ENCODE measurements at regions of chr2 and their contacts with region 1.

Region 1: GRCh38 chr2:126776692-126777619 is 121.0 kb downstream of the GYPC start:
- DNase-seq: peak; percentile 89
- H3K4me3 ChIP-seq: peak overlapping the region; percentile 44 to 61 (median 55)
- H3K27ac ChIP-seq: peak overlapping the region; percentile 30 to 58 (median 40)
- H3K4me1 ChIP-seq: peaks cover 0 to 11% (median 2%) of the 10 kb centered on the region in 4 donors
- H3K27me3 ChIP-seq: no peaks in the 10 kb centered on the region
- CTCF ChIP-seq: peak; percentile 78 to 91 (median 88)
- EP300 ChIP-seq: no peak
- POLR2A ChIP-seq: no peak

Region 2: DNA sequence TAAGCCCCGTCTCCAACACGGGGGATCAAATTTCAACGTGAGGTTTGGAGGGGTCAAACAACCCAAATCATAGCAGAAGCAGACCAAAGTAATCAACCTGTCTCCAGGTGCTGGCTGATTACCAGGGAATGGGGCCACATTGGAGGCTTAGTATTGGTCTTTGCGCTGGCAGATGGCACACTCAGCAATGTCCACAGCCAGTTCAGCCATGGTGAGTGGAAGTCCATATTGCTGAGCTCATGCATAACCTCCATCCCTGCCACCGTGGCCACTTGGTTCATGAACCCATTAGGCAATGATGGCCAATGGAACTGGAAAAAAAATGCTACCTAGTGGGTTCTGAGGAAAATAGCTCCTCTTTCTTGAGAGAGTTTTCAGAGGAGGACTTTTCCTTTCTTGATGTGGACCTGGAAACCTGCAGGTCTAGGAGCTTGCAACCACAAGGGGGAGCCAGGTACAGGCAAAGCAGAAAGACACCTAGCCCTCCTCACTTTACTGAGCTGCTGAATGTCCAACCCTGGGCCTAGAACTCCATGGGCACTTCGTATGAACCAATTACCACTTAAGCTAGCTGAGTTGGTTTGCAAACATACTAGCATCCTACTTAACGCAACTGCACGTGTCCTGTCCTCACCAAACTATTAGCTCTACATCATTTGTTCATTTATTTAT is 249.0 kb before region 1 on chr2:
- intact Hi-C with region 1: loop called (anchors 1 kb)
- DNase-seq: peak; percentile 74
- H3K4me3 ChIP-seq: no peak overlapping the region
- H3K27ac ChIP-seq: no peak overlapping the region
- H3K4me1 ChIP-seq: no peaks in the 10 kb centered on the region
- H3K27me3 ChIP-seq: no peaks in the 10 kb centered on the region
- CTCF ChIP-seq: peak in 3 of 4 experiments; percentile 19 to 45 (median 30)
- EP300 ChIP-seq: no peak
- POLR2A ChIP-seq: no peak

Region 3: DNA sequence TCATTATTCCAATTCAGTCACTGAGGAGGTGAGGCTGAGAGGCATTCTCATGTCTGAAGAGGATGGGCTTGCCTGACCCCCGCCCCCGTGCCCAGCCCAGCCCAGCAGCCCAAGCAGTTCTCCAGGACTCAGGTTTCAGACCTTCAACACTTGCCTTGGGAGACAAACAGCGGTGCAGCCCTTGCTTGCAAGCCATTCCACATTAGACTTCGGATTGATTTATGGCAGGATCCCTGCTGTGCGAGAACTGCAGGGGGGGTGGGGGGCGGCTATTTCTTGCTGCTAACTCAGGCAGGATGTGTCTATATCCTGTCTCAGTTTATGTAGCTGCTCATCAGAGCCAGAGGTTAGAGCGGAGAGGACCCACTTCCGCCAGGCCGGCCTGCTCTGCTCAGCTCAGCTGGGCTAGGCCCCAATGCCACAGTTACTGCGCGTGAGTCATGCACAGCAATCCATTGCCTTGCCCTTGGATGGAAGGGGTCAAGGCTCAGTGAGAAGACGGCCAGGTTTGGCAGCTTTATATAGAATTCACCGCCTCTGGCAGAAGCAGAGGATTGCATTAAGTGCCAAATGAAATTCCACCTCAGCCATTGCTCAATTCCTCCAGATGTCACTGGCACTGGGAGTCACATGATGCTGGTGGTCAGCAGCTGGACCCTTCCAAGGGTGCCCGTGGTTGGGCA is 119.2 kb before region 1 on chr2:
- intact Hi-C with region 1: loop called (anchors 2 kb)
- DNase-seq: peak; percentile 94
- H3K4me3 ChIP-seq: peak overlapping the region; percentile 69 to 88 (median 86)
- H3K27ac ChIP-seq: peak overlapping the region; percentile 94 to 99 (median 99)
- H3K4me1 ChIP-seq: peaks cover 0 to 73% (median 67%) of the 10 kb centered on the region in 4 donors
- H3K27me3 ChIP-seq: no peaks in the 10 kb centered on the region
- CTCF ChIP-seq: no peak
- EP300 ChIP-seq: peak in 3 of 4 donors; percentile 44 to 69 (median 56)
- POLR2A ChIP-seq: peak in 1 of 2 donors; percentile 17

Region 4: DNA sequence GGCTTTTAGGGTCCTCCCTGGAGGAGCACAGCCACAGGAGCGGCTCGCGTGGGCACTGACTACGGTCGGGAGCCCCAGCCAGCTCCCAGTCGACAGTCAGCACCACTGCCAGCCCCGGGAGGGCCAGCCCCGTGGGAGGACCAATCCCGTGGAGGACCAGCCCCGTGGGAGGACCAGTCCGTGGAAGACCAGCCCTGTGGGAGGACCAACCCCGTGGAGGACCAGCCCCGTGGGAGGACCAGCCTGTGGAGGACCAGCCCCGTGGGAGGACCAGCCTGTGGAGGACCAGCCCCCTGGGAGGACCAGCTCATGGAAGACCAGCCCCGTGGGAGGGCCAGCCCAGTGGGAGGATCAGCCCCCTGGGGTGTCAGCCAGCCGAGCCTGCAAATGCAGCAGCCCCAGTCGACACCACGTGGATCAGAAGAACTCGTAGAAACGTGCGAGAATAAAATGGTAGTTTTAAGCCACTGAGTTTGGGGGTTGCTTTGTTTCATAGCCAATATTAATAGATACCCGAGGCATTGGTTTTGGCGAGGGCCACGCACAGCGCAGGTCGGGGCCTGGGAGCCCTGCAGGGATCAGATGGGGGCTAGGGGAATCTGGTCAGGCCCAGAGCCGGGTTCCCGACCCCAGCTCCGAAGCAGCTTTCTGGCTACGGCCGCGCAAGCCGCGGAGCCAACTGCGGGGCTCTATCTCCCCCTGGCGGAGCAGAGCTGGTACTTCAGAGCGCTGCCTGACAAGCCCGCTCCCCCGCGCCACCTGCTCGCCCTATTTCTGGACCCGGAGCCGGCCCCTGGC is 194.7 kb after region 1 on chr2:
- intact Hi-C with region 1: loop called (anchors 2 kb)
- DNase-seq: peak; percentile 87
- H3K4me3 ChIP-seq: peak overlapping the region; percentile 19 to 45 (median 38)
- H3K27ac ChIP-seq: peak overlapping the region; percentile 53 to 75 (median 69)
- H3K4me1 ChIP-seq: peaks cover 0 to 23% (median 15%) of the 10 kb centered on the region in 4 donors
- H3K27me3 ChIP-seq: no peaks in the 10 kb centered on the region
- CTCF ChIP-seq: peak; percentile 76 to 99 (median 86)
- EP300 ChIP-seq: no peak
- POLR2A ChIP-seq: no peak

Measured in sigmoid colon (tissue), 7 donors.